CD8-positive, alpha-beta T cell (primary cell): ENCODE measurements at regions of chr11 and their contacts with region 1.

Region 1: GRCh38 chr11:207208-207862 is at the starts of genes BET1L and RIC8A:
- DNase-seq: peak; percentile 93 to 100 (median 97)
- ATAC-seq: peak; percentile 76
- H3K4me3 ChIP-seq: peak within 1 kb of the TSS; percentile 83 to 89
- H3K4me3 Mint-ChIP-seq: peak within 1 kb of the TSS; percentile 99
- H3K27ac ChIP-seq: peak within 1 kb of the TSS; percentile 91 to 97
- H3K27ac Mint-ChIP-seq: peak within 1 kb of the TSS; percentile 100
- H3K4me1 ChIP-seq: peaks cover 54% of the 10 kb centered on the region
- H3K4me1 Mint-ChIP-seq: peaks cover 58% of the 10 kb centered on the region
- H3K27me3 ChIP-seq: no peaks in the 10 kb centered on the region
- H3K27me3 Mint-ChIP-seq: no peaks in the 10 kb centered on the region
- CTCF ChIP-seq: no peak
- total RNA-seq, gene BET1L: 58.0 to 60.9 TPM
- total RNA-seq, gene RIC8A: 165 to 176 TPM

Region 2: GRCh38 chr11:250740-251299 is 43.5 kb after region 1 on chr11:
- CTCF ChIA-PET with region 1: interaction called, 10 read pairs
- POLR2A ChIA-PET with region 1: interaction called, 7 read pairs
- intact Hi-C with region 1: no loop called
- DNase-seq: peak; percentile 75 to 89 (median 85)
- ATAC-seq: peak; percentile 99
- H3K4me3 ChIP-seq: no peak overlapping the region
- H3K4me3 Mint-ChIP-seq: peak overlapping the region; percentile 31
- H3K27ac ChIP-seq: peak overlapping the region in 1 of 2 experiments; percentile 10
- H3K27ac Mint-ChIP-seq: peak overlapping the region; percentile 92
- H3K4me1 ChIP-seq: peaks cover 5% of the 10 kb centered on the region
- H3K4me1 Mint-ChIP-seq: peaks cover 15% of the 10 kb centered on the region
- H3K27me3 ChIP-seq: no peaks in the 10 kb centered on the region
- H3K27me3 Mint-ChIP-seq: no peaks in the 10 kb centered on the region
- CTCF ChIP-seq: peak; percentile 77

Region 3: GRCh38 chr11:288328-289144 is 81.2 kb after region 1 on chr11 and contains the start of gene PGGHG:
- CTCF ChIA-PET with region 1: no interaction called
- POLR2A ChIA-PET with region 1: interaction called, 21 read pairs
- intact Hi-C with region 1: loop called in 1 of 2 experiments (anchors 1 kb)
- DNase-seq: peak in 7 of 9 experiments; percentile 53 to 78 (median 69)
- ATAC-seq: peak; percentile 25
- H3K4me3 ChIP-seq: peak within 1 kb of the TSS; percentile 56 to 94
- H3K4me3 Mint-ChIP-seq: peak within 1 kb of the TSS; percentile 99
- H3K27ac ChIP-seq: peak within 1 kb of the TSS; percentile 66 to 83
- H3K27ac Mint-ChIP-seq: peak within 1 kb of the TSS; percentile 99
- H3K4me1 ChIP-seq: peaks cover 55% of the 10 kb centered on the region
- H3K4me1 Mint-ChIP-seq: peaks cover 58% of the 10 kb centered on the region
- H3K27me3 ChIP-seq: peaks cover 0 to under 1% of the 10 kb centered on the region in 2 experiments
- H3K27me3 Mint-ChIP-seq: no peaks in the 10 kb centered on the region
- CTCF ChIP-seq: no peak
- total RNA-seq, gene PGGHG: 902 to 919 TPM

Region 4: DNA sequence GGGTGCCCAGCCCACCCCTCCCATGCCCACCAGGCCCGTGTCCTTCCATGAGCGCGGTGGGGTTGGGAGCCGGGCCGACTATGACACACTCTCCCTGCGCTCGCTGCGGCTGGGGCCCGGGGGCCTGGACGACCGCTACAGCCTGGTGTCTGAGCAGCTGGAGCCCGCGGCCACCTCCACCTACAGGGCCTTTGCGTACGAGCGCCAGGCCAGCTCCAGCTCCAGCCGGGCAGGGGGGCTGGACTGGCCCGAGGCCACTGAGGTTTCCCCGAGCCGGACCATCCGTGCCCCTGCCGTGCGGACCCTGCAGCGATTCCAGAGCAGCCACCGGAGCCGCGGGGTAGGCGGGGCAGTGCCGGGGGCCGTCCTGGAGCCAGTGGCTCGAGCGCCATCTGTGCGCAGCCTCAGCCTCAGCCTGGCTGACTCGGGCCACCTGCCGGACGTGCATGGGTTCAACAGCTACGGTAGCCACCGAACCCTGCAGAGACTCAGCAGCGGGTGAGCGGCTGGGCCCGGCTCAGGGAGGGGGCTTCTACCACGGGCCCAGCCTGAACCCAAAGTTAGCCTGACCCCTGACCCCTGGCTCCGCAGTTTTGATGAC is 189.7 kb after region 1 on chr11:
- CTCF ChIA-PET with region 1: no interaction called
- POLR2A ChIA-PET with region 1: no interaction called
- intact Hi-C with region 1: no loop called
- DNase-seq: peak in 4 of 9 experiments; percentile 58 to 72 (median 66)
- ATAC-seq: peak; percentile 67
- H3K4me3 ChIP-seq: peak overlapping the region; percentile 35 to 42
- H3K4me3 Mint-ChIP-seq: peak overlapping the region; percentile 29
- H3K27ac ChIP-seq: no peak overlapping the region
- H3K27ac Mint-ChIP-seq: no peak overlapping the region
- H3K4me1 ChIP-seq: peaks cover 6% of the 10 kb centered on the region
- H3K4me1 Mint-ChIP-seq: peaks cover 3% of the 10 kb centered on the region
- H3K27me3 ChIP-seq: peaks cover 0 to 3% of the 10 kb centered on the region in 2 experiments
- H3K27me3 Mint-ChIP-seq: peaks cover 3% of the 10 kb centered on the region
- CTCF ChIP-seq: no peak

Region 5: DNA sequence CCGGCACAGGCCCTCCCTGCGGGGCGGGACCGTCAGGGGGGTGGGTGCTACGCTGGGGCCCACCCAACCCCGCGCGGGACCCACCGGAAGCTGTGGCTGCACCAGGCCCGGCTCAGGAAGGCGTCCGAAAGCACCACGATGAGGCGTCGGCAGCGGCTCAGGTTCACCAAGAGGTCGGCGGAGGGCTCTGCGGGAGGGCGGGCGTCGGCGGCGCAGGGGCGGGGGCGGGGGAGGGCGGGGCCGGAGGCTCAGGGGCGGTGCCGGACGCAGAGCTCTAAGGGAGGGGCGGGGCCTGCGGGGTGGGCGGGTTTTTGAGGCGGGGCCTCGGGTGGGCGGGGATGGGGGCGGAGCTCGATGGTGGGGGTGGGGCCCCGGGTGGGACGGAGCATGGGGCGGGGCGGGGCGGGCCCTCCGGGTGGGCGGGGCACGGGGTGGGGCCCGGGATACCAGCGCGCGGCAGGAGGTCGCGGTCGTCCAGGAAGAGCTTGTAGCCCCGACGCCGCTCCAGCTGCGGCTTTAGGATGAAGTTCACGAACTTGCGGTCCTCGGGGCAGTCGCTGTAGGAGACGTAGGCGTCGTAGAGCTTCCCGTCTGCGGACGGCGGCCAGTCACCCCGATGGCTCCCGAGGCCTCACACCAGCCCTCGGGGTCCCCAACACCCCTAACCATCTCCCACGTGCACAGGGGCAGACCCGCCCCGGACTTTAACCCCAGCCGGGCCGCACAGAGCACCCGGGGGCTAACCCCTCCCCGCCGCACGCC is 199.8 kb after region 1 on chr11:
- CTCF ChIA-PET with region 1: no interaction called
- POLR2A ChIA-PET with region 1: interaction called, 11 read pairs
- intact Hi-C with region 1: loop called (anchors 2 to 5 kb)
- DNase-seq: peak; percentile 89 to 99 (median 94)
- ATAC-seq: peak; percentile 86
- H3K4me3 ChIP-seq: peak overlapping the region in 1 of 2 experiments; percentile 19
- H3K4me3 Mint-ChIP-seq: no peak overlapping the region
- H3K27ac ChIP-seq: peak overlapping the region; percentile 46 to 73
- H3K27ac Mint-ChIP-seq: peak overlapping the region; percentile 82
- H3K4me1 ChIP-seq: peaks cover 25% of the 10 kb centered on the region
- H3K4me1 Mint-ChIP-seq: peaks cover 17% of the 10 kb centered on the region
- H3K27me3 ChIP-seq: no peaks in the 10 kb centered on the region
- H3K27me3 Mint-ChIP-seq: no peaks in the 10 kb centered on the region
- CTCF ChIP-seq: no peak

Region 6: DNA sequence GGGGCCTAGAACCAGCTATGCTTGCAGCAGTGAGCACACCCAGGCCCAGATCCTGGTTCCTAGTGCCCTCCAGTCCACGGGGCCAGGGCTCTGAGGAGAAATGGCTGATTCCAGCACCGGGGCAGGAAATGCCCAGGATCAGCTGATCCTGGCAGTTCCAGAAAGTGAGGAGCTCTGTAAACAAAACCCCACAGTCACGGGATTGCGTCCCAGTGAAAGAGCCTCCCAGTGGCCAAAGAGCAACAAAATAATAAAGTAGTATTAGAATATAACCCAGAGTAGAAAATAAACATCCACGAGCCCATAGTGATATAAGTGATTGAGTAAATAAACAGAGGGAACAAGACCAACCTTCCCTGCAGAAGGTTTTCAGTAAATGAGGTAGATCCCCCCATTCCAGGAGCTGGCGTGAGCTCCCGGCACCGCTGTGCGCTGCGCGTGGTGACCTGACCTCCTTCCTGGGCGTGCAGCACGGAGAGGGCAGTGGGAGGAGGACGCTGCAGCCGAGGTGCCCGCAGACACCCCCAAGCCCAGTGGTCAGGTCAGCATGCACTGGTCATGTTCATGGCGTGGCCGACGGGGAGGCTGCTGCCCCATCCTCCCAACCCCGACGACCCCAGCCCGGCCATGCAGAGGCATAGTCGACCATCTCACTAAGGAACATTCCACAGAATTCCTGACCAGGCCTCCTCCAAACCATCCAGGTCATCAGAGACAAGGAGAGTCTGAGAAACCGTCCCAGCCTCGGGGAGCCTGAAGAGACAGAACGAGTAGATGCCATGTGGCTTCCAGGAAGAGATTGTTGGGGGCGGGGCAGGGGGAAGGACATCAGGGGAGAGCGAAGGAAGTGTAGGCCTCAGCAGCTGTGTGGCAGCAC is 262.6 kb after region 1 on chr11:
- CTCF ChIA-PET with region 1: no interaction called
- POLR2A ChIA-PET with region 1: no interaction called
- intact Hi-C with region 1: no loop called
- DNase-seq: no peak
- ATAC-seq: no peak
- H3K4me3 ChIP-seq: no peak overlapping the region
- H3K4me3 Mint-ChIP-seq: no peak overlapping the region
- H3K27ac ChIP-seq: no peak overlapping the region
- H3K27ac Mint-ChIP-seq: no peak overlapping the region
- H3K4me1 ChIP-seq: no peaks in the 10 kb centered on the region
- H3K4me1 Mint-ChIP-seq: no peaks in the 10 kb centered on the region
- H3K27me3 ChIP-seq: no peaks in the 10 kb centered on the region
- H3K27me3 Mint-ChIP-seq: no peaks in the 10 kb centered on the region
- CTCF ChIP-seq: no peak

Region 7: DNA sequence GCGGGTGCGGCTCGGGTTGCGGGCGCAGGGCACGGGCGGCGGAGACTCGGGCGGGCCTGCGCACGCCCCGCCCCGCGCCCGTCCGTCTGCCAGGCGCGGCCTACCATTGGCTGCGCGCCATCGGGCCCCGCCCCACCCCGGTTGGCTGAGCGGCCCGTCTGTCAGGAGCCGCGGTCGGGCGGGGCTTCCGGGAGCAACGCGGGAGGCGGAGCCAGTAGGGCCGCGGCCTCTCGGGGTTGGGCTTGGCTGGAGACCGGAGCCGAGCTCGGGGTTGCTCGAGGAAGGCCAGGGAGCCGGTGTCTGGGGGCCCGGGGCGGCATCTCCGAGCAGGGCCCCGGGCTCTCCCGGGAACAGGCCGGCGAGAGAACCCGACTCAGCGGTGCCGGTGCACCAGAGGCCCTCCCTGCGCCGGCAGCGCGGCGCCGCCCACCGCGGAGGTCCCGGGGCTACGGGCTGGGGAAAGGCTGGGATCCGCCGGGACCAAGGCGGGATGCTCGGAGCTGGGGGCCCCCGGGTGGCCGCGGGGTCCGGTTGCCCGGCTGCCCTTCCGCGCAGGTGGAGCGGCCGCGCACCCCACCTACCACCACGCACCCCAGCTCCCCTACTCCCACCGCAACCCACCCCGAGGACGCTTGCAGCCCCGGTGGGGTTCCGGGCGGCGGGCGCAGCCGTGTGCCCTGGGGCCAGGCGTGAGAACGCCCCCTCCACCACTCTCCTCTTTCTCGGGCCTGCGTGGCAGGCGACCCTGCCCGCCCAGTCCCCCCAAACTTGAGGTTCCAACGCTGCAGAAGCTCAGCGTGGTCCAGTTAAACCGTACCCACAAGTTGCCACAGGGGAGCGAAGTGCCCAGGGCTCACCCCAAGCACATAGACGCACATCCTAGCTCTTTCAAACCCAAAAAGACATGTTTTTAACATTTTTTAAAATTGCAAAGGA is 328.5 kb after region 1 on chr11 and contains the start of gene HRAS:
- CTCF ChIA-PET with region 1: no interaction called
- POLR2A ChIA-PET with region 1: no interaction called
- intact Hi-C with region 1: loop called in 1 of 2 experiments (anchors 5 kb)
- DNase-seq: peak; percentile 92 to 98 (median 97)
- ATAC-seq: peak; percentile 88
- H3K4me3 ChIP-seq: peak within 1 kb of the TSS; percentile 60 to 66
- H3K4me3 Mint-ChIP-seq: peak within 1 kb of the TSS; percentile 93
- H3K27ac ChIP-seq: peak within 1 kb of the TSS; percentile 73 to 89
- H3K27ac Mint-ChIP-seq: peak within 1 kb of the TSS; percentile 95
- H3K4me1 ChIP-seq: peaks cover 28% of the 10 kb centered on the region
- H3K4me1 Mint-ChIP-seq: peaks cover 24% of the 10 kb centered on the region
- H3K27me3 ChIP-seq: no peaks in the 10 kb centered on the region
- H3K27me3 Mint-ChIP-seq: no peaks in the 10 kb centered on the region
- CTCF ChIP-seq: no peak
- total RNA-seq, gene HRAS: 25.2 to 25.5 TPM

Region 8: GRCh38 chr11:925496-926321 is 718.4 kb after region 1 on chr11 and contains the start of gene AP2A2:
- CTCF ChIA-PET with region 1: no interaction called
- POLR2A ChIA-PET with region 1: no interaction called
- intact Hi-C with region 1: loop called in 1 of 2 experiments (anchors 5 kb)
- DNase-seq: peak; percentile 76 to 96 (median 92)
- ATAC-seq: peak; percentile 72
- H3K4me3 ChIP-seq: peak within 1 kb of the TSS; percentile 48 to 70
- H3K4me3 Mint-ChIP-seq: peak within 1 kb of the TSS; percentile 82
- H3K27ac ChIP-seq: peak within 1 kb of the TSS; percentile 37 to 67
- H3K27ac Mint-ChIP-seq: peak within 1 kb of the TSS; percentile 88
- H3K4me1 ChIP-seq: peaks cover 41% of the 10 kb centered on the region
- H3K4me1 Mint-ChIP-seq: peaks cover 32% of the 10 kb centered on the region
- H3K27me3 ChIP-seq: no peaks in the 10 kb centered on the region
- H3K27me3 Mint-ChIP-seq: no peaks in the 10 kb centered on the region
- CTCF ChIP-seq: peak; percentile 67
- total RNA-seq, gene AP2A2: 38.6 to 44.3 TPM